GM13976 (cell line): ENCODE measurements at regions of chrX and their contacts with region 1.

Region 1: GRCh38 chrX:30735839-30736238 is 82.6 kb downstream of the GK start:
- DNase-seq: peak; percentile 62
- CTCF ChIP-seq: peak; percentile 54

Region 2: DNA sequence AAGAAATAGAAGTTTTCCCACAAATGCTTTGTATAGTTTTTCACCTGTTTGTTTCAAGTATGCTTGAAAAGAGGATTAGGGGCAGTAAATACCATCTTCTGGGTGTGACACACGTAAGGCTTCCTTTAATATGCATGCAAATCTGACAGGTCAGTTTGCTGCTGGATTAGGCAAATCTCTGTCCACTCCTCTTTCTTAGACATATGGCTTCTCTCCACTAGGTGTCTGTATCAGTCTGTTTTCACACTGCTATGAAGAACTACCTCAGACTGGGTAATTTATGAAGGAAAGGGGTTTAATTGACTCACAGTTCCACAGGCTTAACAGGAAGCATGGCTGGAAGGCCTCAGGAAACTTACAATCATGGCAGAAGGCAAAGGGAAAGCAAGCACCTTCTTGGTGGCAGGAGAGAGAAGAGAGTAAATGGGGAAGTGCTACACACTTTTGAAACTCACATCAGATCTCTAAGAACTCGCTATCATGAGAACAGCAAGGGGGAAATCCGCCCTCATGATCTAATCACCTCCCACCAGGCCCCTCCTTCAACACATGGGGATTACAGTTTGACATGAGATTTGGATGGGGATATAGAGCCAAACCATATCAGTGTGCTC is 86.3 kb after region 1 on chrX:
- in situ Hi-C with region 1: loop called (anchors 10 kb)
- DNase-seq: no peak
- CTCF ChIP-seq: no peak

Region 3: GRCh38 chrX:31021537-31021936 is 285.7 kb after region 1 on chrX:
- in situ Hi-C with region 1: no loop called
- DNase-seq: no peak
- CTCF ChIP-seq: no peak